ENCODE measurements at regions of chr2 and their contacts with region 1.

Region 1: DNA sequence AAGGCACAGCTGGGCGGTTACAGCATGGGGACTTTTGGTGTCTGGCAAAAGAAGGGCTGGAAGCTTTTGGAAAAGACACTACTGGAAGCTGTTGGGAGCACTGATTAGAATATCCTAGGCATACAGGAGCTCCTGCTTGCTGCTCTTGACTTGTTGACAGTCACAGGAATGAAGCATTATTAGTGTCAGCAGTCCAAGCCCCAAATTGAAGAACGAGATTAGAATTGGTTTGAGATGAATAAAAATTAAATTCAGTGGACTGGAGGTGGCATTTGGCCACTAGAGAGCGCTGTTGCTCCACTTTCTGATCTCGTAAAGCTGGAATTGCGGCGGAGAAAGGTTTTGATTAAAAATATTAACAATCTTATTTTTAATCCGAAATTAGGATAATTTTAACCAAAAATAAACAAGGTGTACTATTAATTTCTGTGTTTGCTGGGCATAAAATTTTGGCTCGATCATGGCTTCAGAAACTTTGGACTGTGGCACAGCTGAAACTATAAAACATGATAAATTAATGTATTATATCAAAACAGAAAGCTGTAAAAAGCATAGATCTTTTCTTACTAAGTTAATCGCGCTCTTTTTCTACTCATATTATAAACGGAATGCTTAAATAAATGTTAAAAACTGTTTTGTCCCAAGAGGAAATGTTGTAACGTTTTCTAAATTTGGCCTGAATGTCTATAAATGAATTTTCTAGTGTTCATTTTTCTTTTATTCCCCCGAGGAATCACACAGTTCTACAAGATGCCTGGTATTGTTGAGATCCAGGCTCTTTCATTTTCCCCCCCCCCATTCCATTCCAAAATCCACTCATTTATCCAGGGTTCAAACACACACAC is 2.4 kb upstream of the HOXD8 start:
- DNase-seq: peak; percentile 39 to 78
- ATAC-seq: peak in 1 of 8 donors; percentile 56
- H3K4me3 ChIP-seq: no peak overlapping the region
- H3K27ac ChIP-seq: no peak overlapping the region
- H3K4me1 ChIP-seq: peaks cover 0 to 52% (median 25%) of the 10 kb centered on the region in 9 donors
- H3K27me3 ChIP-seq: peaks cover 62 to 99% (median 97%) of the 10 kb centered on the region in 7 donors
- CTCF ChIP-seq: peak; percentile 83 to 95 (median 92)

Region 2: DNA sequence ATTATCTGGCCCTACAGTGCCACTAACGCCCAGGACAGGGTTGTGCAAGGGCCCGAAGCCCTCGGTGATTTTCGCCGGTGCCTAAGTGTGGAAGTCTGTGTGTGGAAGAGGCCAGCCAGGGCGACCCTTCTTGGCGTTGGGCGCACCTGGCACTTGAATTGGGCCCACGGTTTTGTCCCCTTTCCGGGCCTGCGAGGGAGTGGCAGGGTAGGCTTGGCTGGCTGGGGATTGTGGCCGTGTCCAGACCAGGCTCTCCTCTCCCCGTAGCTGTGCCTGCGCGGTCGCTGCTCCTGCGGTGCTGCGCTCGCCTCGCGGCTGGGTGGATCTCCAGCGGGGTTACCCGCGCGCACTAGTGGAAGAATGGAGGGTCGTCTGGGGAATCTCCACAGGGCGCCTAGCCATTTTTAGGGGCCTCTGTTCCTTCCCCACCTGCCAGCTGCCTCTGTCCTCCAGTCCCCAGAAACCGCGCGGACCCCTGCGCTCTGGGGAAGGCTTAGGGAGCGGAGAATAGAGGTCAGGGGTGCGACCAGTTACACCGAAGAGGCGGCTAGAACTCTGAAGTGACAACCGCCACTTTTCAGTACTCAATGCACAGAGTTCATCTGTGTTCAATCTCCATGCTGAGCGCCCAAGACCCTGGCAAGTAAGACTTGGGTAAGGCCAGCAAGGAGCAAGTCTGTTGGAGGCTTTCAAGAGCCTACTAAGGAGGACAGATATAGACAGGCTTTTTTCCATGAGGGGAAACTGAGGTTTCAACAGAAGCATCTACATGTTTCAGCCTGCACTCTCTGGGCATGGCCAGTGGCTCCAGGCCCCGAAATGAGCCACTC is 59.3 kb before region 1 on chr2:
- intact Hi-C with region 1: loop called in 1 of 10 experiments (anchors 2 kb)
- DNase-seq: no peak
- ATAC-seq: peak in 5 of 8 donors; percentile 34 to 62 (median 47)
- H3K4me3 ChIP-seq: peak overlapping the region in 8 of 10 donors; percentile 18 to 42 (median 32)
- H3K27ac ChIP-seq: no peak overlapping the region
- H3K4me1 ChIP-seq: peaks cover 0 to 26% (median 17%) of the 10 kb centered on the region in 9 donors
- H3K27me3 ChIP-seq: peaks cover 43 to 100% (median 97%) of the 10 kb centered on the region in 7 donors
- CTCF ChIP-seq: no peak

Region 3: DNA sequence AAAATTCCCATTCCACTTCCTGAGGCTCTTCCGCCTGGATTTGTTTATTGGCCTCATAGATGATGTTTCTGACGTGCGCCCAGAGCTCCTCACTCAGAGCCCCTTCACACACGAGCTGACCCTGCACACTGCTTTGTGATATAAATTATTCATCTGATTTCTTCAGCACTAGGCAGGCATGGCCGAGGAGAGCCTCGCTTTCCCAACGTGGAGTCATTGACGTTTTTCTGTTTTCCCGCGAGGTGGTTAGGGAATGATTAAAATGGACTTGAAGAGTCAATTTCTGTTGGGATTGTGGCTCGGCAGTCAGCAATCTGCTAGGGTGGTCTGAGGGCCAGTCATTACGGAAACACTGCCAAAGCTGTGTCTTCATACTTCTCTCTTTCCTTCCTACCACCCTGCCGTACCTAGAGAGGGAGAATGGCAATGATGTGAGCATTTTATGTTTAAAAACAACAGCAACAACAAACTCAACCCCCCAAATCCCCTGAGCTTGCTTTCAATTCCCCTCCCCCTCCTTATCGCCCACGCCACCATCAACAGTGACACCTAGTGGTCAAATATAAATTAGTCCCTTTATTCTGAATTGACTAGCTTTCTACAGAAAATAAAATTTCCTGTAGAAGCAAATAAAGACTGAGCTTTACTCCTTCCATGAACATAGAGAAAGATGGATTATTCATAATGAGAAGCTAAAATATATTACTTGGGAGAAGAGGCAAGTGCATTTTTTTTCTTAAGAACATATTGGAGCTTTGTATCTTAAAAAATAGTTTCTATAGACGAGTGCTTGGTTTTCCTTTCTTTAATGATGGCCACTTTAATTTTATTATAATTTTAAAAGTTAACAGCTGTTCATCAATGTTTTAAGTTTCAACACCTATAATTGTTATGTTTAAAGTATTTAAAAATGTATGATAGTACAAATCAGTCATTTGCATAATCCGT is 427.2 kb after region 1 on chr2:
- intact Hi-C with region 1: loop called in 2 of 10 experiments (anchors 5 kb)
- DNase-seq: peak; percentile 11 to 38
- ATAC-seq: peak; percentile 62 to 90 (median 76)
- H3K4me3 ChIP-seq: peak overlapping the region in 9 of 10 donors; percentile 32 to 59 (median 45)
- H3K27ac ChIP-seq: peak overlapping the region in 8 of 10 donors; percentile 15 to 64 (median 53)
- H3K4me1 ChIP-seq: peaks cover 0 to 22% (median 17%) of the 10 kb centered on the region in 9 donors
- H3K27me3 ChIP-seq: peaks cover 0 to 67% (median 35%) of the 10 kb centered on the region in 7 donors
- CTCF ChIP-seq: peak; percentile 66 to 86 (median 76)

Region 4: GRCh38 chr2:176653479-176654443 is 526.6 kb after region 1 on chr2:
- intact Hi-C with region 1: loop called in 3 of 10 experiments (anchors 1 to 5 kb)
- DNase-seq: peak; percentile 45
- ATAC-seq: peak; percentile 38 to 87 (median 67)
- H3K4me3 ChIP-seq: no peak overlapping the region
- H3K27ac ChIP-seq: no peak overlapping the region
- H3K4me1 ChIP-seq: peaks cover 0 to 7% (median 0%) of the 10 kb centered on the region in 9 donors
- H3K27me3 ChIP-seq: peaks cover 0 to 67% (median 29%) of the 10 kb centered on the region in 7 donors
- CTCF ChIP-seq: peak; percentile 34 to 69 (median 67)

Region 5: DNA sequence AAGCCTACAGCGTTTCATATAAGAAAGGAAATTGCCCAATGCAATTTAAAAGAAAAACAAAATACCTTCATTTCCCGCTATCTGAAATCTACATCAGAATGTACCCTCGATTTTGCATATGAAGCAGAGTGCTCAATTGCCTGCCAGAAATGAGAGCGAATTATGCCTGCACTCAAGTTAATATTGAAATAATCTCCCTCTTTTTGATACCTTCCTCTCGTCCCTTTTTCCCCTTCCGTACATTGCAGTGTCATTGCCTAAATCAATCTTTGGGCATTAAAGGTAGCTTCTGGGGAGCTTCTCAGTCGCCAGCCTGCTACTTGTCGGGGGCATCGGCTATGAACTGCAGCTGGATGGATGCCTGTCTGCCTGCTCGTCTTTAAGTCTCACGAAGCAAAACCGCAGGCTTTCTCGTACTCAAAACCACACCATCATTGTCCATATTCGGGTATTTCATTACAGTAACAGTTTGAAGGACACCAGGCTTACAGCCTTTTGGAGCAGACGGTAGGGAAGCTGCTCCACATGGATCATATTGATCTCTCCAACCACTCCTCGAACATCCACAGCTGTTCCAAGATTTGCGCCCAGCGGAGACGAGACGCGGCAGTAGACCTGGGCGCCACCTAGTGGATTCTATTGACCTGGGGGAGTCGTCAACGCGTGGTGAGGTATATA is 1021.5 kb after region 1 on chr2:
- intact Hi-C with region 1: loop called in 9 of 10 experiments (anchors 5 to 10 kb)
- DNase-seq: peak; percentile 57 to 71
- ATAC-seq: peak; percentile 55 to 92 (median 82)
- H3K4me3 ChIP-seq: peak overlapping the region in 9 of 10 donors; percentile 9 to 47 (median 44)
- H3K27ac ChIP-seq: no peak overlapping the region
- H3K4me1 ChIP-seq: peaks cover 0 to 16% (median 8%) of the 10 kb centered on the region in 9 donors
- H3K27me3 ChIP-seq: peaks cover 0 to 85% (median 72%) of the 10 kb centered on the region in 7 donors
- CTCF ChIP-seq: peak; percentile 48 to 87 (median 78)

Measured in heart right ventricle (tissue), 16 donors.